ENCODE measurements at regions of chr11 and their contacts with region 1.

Region 1: DNA sequence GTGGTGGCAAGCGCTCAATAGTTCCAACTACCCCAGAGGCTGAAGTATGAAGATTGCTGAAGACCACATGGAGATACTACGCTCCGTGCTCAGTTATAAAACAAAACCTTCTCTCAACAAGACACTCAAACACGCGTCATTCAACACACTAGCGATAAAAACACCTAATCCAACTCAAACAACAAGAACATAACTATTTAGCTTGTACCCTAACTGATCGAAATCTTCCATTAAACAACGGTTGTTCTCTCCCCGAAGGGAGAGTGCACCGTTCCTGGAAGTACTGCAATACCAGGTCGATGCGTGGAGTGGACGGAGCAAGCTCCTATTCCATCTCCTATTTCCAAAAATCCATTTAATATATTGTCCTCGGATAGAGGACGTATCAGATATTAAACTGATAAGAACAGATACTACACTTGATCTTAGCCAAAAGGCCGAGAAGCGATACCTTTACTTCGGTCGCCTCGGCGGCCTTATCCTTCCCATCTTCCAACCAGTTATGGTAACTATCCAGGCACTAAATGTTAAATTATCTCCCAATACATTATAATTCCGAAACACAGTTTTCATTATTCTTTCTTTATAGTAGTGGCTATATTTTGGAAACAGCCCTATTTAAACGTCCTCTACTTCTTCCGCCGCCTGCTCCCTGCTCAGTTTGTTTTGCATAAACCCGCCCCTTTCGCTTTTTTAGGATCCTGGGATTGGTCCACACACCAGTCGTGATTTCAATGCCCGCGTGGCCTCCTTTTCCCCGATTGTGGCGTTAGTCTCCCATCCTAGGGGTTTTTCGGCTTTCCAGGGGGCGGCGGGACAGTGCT is 2.2 kb upstream of the WDR74 start:
- DNase-seq: peak; percentile 92
- CTCF ChIP-seq: no peak

Region 2: DNA sequence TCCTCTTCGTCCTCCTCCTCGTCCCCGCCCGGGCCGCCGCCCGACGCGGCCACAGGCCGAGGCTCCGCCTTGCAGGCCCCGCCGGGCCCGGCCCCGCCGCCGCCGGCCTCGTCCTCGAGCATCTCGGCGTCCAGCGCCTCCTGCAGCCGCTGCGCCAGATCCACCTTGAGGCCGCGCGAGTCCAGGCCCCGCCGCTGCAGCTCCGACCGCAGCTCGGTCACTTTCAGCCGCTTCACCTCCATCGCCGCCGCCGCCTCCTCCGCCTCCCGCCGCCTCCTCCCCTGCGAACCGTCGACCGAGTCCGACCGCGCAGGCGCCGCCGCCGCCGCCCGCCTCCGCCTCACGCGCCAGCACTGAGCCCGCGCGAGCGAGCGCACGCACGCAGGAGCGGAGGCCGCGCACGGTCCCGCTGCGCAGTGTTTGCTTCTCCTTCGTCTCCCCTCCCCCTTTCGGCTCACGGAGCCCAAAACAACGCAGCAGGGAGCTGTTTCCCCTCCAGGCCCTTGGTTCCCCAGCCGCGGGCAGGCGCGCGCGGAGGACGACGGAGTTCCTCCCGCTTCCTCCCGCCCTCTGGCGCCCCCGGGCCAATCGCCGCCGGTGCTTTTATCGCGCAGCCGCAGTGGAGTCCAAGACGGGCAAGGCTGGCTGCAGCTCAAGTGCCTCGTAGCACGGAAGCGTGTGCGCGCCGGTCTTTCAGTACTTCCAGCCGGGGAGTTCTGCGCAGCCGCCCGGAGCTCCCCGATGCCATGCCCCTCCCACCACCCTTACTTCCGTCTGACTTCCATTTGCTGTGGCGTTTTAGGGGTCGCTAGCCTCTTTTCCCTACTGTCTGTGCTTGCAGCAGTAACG is 114.4 kb before region 1 on chr11 and contains the start of gene HNRNPUL2:
- CTCF ChIA-PET with region 1: no interaction called
- POLR2A ChIA-PET with region 1: interaction called, 21 read pairs
- DNase-seq: peak; percentile 98
- CTCF ChIP-seq: no peak

Region 3: GRCh38 chr11:62771144-62772021 is 70.2 kb before region 1 on chr11 and contains the start of gene TAF6L:
- CTCF ChIA-PET with region 1: no interaction called
- POLR2A ChIA-PET with region 1: interaction called, 21 read pairs
- DNase-seq: peak; percentile 93
- CTCF ChIP-seq: no peak

Region 4: DNA sequence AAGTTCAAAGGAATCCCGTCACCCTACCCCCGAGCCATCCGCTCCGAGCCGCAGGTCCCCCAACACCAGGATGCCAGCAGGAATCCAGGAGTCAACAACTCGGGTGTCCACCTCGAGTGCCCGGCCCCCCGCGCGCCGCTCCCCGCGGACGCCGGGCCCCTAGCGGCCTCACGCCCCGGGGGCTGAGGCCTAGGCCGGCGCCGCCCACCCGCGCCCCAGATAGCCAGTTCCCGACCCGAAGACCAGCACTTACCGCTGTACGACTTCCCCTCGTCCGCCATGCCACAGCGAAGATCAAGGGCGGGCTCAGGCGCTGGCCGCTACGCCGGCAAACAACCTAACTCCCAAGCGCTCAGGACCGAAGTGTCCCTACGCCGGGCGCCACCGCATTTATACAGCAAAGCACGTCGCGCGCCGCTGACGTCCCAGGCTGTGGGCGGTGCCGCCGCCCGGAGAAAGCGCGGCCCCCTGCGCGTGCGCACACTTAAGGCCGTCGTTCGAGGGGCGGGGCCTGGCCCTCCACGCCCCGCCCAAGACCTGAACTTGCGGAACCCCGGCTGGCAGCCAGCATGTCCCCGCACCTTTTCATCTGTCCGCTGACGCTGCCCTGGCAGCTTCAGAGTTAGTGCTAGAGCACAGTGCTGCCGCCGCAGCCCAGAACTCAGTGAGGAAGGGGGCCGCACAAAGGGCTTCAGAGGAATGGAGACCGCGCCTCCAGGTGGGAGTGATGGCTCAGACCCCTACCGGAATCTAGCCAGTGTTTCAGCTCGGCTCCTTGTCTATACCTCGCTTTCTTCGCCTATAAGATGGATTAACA is 36.3 kb before region 1 on chr11 and contains the start of gene NXF1:
- CTCF ChIA-PET with region 1: no interaction called
- POLR2A ChIA-PET with region 1: interaction called, 25 read pairs
- DNase-seq: peak; percentile 100
- CTCF ChIP-seq: no peak

Region 5: DNA sequence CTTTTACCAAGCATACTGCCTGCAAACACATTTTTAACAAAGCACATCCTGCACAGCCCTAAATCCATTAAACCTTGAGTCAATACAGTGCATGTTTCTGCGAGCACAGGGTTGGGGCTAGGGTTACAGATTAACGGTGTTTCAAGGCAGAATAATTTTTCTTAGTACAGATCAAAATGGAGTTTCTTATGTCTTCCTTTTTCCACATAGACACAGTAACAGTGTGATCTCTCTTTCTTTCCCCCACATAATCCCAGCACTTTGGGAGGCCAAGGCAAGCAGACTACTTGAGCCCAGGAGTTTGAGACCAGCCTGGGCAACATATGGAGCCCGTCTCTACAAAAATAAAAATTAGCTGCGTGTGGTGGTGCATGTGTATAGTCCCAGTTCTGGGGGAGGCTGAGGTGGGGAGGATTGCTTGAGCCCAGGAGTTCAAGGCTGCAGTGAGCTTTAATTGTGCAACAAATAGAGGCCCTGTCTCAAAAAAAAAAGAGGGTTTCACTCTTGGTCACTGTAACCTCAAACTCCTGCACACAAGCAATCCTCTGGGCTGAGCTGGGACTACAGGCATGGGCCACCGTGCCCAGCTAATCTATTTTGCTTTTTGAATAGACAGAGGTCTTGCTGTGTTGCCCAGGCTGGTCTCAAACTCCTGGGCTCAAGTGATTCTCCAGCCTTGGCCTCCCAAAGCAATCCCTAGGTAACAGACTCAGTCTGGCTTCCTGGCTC is 19.4 kb after region 1 on chr11:
- CTCF ChIA-PET with region 1: interaction called, 16 read pairs
- POLR2A ChIA-PET with region 1: interaction called, 236 read pairs
- DNase-seq: no peak
- CTCF ChIP-seq: no peak

Measured in GM10248 (cell line).